ENCODE measurements at regions of chr18 and their contacts with region 1.

Region 1: DNA sequence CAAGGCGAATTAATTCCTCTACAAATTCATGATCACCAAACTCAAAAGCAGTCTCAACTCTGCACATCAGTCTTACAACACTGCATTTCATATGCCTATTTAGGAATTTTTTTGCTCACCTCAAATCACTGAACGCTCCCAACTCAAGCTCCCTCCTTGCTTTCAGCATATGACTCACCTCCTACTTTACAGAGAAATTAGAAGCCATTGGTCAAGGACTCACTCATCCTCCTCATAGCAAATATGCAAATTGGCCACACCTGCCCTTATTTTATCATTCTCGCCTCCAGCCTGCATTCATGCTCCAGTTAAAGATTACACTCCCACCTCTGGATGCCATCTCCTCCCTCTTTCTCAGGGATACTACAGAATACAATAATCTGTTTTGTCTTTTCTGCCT is 148.8 kb downstream of the MBD2 start:
- DNase-seq: no peak
- H3K4me3 ChIP-seq: no peak overlapping the region
- H3K27ac ChIP-seq: no peak overlapping the region
- H3K4me1 ChIP-seq: no peaks in the 10 kb centered on the region
- H3K27me3 ChIP-seq: no peaks in the 10 kb centered on the region
- CTCF ChIP-seq: no peak
- EP300 ChIP-seq: no peak
- POLR2A ChIP-seq: no peak

Region 2: DNA sequence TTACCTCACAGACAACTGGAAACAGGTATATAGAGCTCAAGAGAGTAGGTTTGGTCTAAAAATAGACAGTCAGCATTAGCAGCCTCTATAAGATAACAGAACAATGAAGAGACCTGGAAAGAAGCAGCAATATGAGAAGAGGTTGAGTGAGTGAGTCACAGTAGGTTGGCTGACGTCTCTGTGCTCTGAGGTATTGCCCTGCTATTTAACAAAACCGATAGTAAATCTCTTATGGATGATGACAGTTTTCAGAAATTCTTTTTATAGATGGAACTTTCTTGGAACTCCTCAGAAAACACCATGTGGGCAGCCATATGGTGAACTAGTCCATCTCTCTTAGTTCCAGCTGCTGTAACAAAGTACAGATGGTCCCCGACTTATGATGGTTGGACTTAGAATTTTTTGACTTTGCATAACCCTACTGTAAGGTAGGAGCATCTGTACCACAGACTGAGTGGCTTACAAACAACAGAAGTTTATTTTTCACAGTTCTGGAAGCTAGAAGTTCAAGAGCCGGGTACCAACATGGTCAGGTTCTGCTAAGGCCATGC is 25.3 kb after region 1 on chr18:
- in situ Hi-C with region 1: no loop called
- intact Hi-C with region 1: no loop called
- DNase-seq: no peak
- H3K4me3 ChIP-seq: no peak overlapping the region
- H3K27ac ChIP-seq: no peak overlapping the region
- H3K4me1 ChIP-seq: no peaks in the 10 kb centered on the region
- H3K27me3 ChIP-seq: no peaks in the 10 kb centered on the region
- CTCF ChIP-seq: no peak
- EP300 ChIP-seq: no peak
- POLR2A ChIP-seq: no peak

Region 3: GRCh38 chr18:56009437-56009836 is 1933.7 kb after region 1 on chr18:
- in situ Hi-C with region 1: no loop called
- intact Hi-C with region 1: loop called (anchors 5 kb)
- DNase-seq: no peak
- H3K4me3 ChIP-seq: no peak overlapping the region
- H3K27ac ChIP-seq: no peak overlapping the region
- H3K4me1 ChIP-seq: no peaks in the 10 kb centered on the region
- H3K27me3 ChIP-seq: no peaks in the 10 kb centered on the region
- CTCF ChIP-seq: no peak
- EP300 ChIP-seq: no peak
- POLR2A ChIP-seq: no peak

Measured in transverse colon (tissue), 4 donors.